ENCODE measurements at regions of chr4 and their contacts with region 1.

Region 1: GRCh38 chr4:169619959-169620879 is at the start of gene CLCN3:
- DNase-seq: peak; percentile 97
- H3K4me3 ChIP-seq: peak within 1 kb of the TSS; percentile 64 to 69
- H3K27ac ChIP-seq: peak within 1 kb of the TSS; percentile 98 to 99
- H3K4me1 ChIP-seq: peaks cover 2% of the 10 kb centered on the region
- H3K27me3 ChIP-seq: no peaks in the 10 kb centered on the region
- CTCF ChIP-seq: peak in 3 of 4 experiments; percentile 5 to 77 (median 49)
- POLR2A ChIP-seq: peak; percentile 97
- total RNA-seq, gene CLCN3: 67.2 to 96.4 TPM

Region 2: GRCh38 chr4:169690787-169691186 is 70.6 kb after region 1 on chr4:
- intact Hi-C with region 1: no loop called
- DNase-seq: no peak
- H3K4me3 ChIP-seq: no peak overlapping the region
- H3K27ac ChIP-seq: no peak overlapping the region
- H3K4me1 ChIP-seq: no peaks in the 10 kb centered on the region
- H3K27me3 ChIP-seq: no peaks in the 10 kb centered on the region
- CTCF ChIP-seq: no peak
- POLR2A ChIP-seq: no peak

Region 3: DNA sequence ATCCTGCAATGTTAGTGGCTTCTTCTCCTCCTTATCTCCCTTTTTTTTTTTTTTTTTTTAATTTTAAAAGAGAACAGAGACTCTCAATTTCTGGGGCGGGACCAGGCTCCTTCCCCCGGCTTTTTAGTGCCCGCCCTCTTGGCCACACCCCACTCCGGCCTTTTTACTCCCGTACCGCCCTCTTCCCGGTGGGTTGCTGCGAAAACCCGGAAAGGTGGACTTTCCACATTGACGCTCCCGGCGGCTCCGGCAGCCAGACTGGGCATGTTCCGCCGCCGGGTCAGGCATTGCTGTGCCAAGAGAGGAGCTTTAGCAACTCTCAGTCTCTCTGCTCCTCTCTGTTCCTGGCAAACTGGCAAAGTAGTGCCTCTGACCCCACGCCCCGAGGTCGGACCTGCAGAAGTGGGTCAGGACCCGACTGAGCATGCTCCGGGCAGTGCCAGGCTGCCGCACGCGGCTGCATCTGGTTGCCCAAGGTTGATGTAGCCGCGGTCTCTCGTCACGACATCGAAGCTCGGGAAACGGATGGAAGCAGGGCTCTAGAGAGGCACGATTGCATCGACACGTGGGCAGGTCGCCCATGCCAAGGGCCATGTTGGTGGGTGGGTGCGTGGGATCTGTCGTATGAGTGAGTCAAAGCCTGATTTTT is 407.1 kb after region 1 on chr4:
- intact Hi-C with region 1: loop called (anchors 10 kb)
- DNase-seq: peak; percentile 90
- H3K4me3 ChIP-seq: peak overlapping the region; percentile 77 to 89
- H3K27ac ChIP-seq: peak overlapping the region; percentile 80 to 87
- H3K4me1 ChIP-seq: no peaks in the 10 kb centered on the region
- H3K27me3 ChIP-seq: no peaks in the 10 kb centered on the region
- CTCF ChIP-seq: no peak
- POLR2A ChIP-seq: peak; percentile 12